Tibial artery (tissue), 4 donors: ENCODE measurements at regions of chr19 and their contacts with region 1.

Region 1: DNA sequence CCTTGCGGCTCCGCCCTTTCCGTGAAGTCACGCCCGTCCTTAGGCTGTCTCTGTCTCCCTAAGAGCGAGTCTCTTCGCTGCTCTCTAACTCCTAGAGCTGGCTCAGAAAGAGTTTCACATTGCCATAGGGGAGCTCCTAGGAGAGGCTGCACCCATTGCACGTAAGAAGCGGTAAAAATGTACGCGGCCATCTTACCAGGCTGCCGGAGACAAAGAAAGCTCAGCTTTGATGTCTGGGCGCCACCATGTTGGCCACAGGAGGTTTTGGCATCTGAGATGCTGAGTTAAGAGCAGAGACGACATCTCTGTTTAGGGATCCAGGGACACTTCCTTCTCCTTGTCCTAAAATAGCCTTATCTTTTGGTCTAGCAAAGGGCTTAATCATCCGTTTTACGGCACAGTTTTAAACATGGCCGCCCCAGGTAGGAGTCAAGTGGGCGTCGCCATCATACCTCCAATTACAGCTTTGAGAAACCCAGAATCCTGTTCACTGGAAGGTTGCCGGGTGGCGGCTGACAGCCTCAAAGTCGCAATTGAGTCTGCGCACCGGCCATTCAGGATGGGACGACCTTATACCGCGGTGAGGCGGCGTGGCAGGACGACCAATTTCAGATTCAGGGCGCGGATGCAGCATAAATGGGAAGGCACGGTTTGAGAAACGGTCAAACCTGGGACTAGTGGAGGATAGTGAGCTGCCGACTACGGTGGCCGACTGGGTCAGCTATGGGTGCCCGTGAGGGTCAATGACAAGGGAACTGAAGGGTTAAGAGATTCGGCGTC is at the start of gene ZNF793:
- DNase-seq: peak; percentile 68 to 87
- H3K4me3 ChIP-seq: peak within 1 kb of the TSS; percentile 70 to 80
- H3K27ac ChIP-seq: peak within 1 kb of the TSS; percentile 87 to 98
- H3K4me1 ChIP-seq: peaks cover 0 to 19% (median 3%) of the 10 kb centered on the region in 4 donors
- H3K27me3 ChIP-seq: no peaks in the 10 kb centered on the region
- CTCF ChIP-seq: no peak

Region 2: GRCh38 chr19:37251308-37252229 is 255.0 kb before region 1 on chr19:
- intact Hi-C with region 1: no loop called
- DNase-seq: peak; percentile 71 to 89
- H3K4me3 ChIP-seq: peak overlapping the region; percentile 63 to 80
- H3K27ac ChIP-seq: peak overlapping the region; percentile 59 to 68
- H3K4me1 ChIP-seq: no peaks in the 10 kb centered on the region
- H3K27me3 ChIP-seq: no peaks in the 10 kb centered on the region
- CTCF ChIP-seq: no peak

Region 3: DNA sequence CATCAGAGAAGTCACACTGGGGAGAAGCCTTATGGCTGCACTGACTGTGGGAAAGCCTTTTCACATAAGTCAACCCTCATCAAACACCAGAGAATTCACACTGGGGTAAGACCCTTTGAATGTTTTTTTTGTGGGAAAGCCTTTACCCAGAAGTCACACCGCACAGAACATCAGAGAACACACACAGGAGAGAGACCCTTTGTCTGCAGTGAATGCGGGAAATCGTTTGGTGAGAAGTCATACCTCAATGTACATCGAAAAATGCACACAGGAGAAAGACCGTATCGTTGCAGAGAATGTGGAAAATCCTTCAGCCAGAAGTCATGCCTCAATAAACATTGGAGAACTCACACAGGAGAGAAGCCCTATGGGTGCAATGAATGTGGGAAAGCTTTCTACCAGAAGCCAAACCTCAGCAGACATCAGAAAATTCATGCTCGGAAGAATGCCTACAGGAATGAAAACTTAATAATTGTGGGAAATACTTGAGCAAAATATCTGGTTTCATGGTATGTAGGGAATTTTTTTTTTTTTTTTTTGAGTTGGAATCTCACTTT is 30.9 kb after region 1 on chr19:
- intact Hi-C with region 1: no loop called
- DNase-seq: no peak
- H3K4me3 ChIP-seq: no peak overlapping the region
- H3K27ac ChIP-seq: no peak overlapping the region
- H3K4me1 ChIP-seq: no peaks in the 10 kb centered on the region
- H3K27me3 ChIP-seq: no peaks in the 10 kb centered on the region
- CTCF ChIP-seq: no peak

Region 4: GRCh38 chr19:37655689-37656371 is 149.3 kb after region 1 on chr19:
- intact Hi-C with region 1: loop called (anchors 5 kb)
- DNase-seq: peak; percentile 74 to 91
- H3K4me3 ChIP-seq: peak overlapping the region; percentile 67 to 77
- H3K27ac ChIP-seq: peak overlapping the region; percentile 87 to 91
- H3K4me1 ChIP-seq: peaks cover 0 to 25% (median 16%) of the 10 kb centered on the region in 4 donors
- H3K27me3 ChIP-seq: no peaks in the 10 kb centered on the region
- CTCF ChIP-seq: no peak